ENCODE measurements at regions of chr10 and their contacts with region 1.

Region 1: DNA sequence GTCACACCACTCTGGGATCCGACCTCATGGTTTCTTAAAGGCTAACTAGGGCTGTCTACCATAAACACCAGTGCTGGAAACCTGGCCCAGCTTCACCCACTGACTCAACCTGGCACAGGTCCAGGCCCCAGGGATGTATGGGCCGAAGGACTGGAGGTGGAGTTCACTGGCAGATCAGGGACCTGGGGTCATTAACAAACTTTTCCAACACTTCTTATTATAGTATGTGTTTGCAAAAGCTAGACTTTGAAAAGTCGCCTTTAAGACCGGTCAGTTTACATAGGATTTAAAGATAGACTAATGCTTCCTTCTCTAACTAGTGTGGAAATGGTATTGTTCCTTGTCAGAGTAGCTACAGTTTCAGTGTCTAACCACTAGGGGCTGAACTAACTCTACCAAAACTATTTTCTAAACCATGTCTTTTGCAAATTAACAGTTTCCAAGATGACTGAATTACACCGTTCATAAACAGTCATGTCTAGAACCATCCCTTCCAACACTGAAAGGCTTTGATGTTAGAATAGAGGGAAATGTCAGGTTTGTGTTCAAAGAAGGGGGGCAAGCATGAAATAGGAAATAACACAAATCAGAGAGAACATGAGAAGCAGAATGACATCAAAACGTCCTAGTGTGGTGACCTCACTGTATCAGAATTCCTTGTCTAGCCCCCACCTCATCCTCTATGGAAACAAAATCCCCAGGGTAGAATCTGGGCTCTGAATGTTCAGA is 29.7 kb downstream of the STN1 start:
- DNase-seq: peak; percentile 33
- ATAC-seq: peak; percentile 88
- H3K4me3 Mint-ChIP-seq: no peak overlapping the region
- H3K27ac Mint-ChIP-seq: peak overlapping the region; percentile 65
- H3K4me1 Mint-ChIP-seq: peaks cover 27% of the 10 kb centered on the region
- H3K27me3 Mint-ChIP-seq: no peaks in the 10 kb centered on the region
- CTCF ChIP-seq: peak; percentile 91

Region 2: DNA sequence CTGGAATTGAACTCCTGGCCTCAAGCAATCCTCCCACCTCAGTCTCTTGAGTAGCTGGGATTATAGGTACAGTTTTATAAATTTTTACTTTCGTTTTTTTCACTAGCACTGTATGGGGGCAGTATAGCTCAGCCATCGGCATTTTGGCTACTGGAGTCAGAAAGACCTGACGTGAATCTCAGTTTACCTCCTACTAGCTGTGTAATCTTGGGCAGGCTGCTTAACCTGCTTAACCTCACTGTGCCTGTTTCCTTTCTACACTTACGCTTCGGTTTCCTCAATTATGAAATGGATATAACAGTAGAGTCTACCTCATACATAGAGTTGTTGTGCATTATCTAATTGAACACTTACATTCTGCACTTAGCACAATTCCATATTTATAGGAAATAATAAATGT is 13.0 kb after region 1 on chr10:
- CTCF ChIA-PET with region 1: interaction called, 18 read pairs
- POLR2A ChIA-PET with region 1: interaction called, 4 read pairs
- intact Hi-C with region 1: no loop called
- DNase-seq: no peak
- ATAC-seq: peak; percentile 79
- H3K4me3 Mint-ChIP-seq: peak overlapping the region; percentile 59
- H3K27ac Mint-ChIP-seq: peak overlapping the region; percentile 81
- H3K4me1 Mint-ChIP-seq: peaks cover 50% of the 10 kb centered on the region
- H3K27me3 Mint-ChIP-seq: no peaks in the 10 kb centered on the region
- CTCF ChIP-seq: no peak

Region 3: GRCh38 chr10:103942866-103943265 is 54.6 kb after region 1 on chr10:
- CTCF ChIA-PET with region 1: interaction called, 10 read pairs
- POLR2A ChIA-PET with region 1: no interaction called
- intact Hi-C with region 1: no loop called
- DNase-seq: no peak
- ATAC-seq: no peak
- H3K4me3 Mint-ChIP-seq: no peak overlapping the region
- H3K27ac Mint-ChIP-seq: no peak overlapping the region
- H3K4me1 Mint-ChIP-seq: peaks cover 3% of the 10 kb centered on the region
- H3K27me3 Mint-ChIP-seq: no peaks in the 10 kb centered on the region
- CTCF ChIP-seq: no peak

Region 4: GRCh38 chr10:104018471-104018870 is 130.2 kb after region 1 on chr10:
- CTCF ChIA-PET with region 1: interaction called, 15 read pairs
- POLR2A ChIA-PET with region 1: no interaction called
- intact Hi-C with region 1: no loop called
- DNase-seq: no peak
- ATAC-seq: no peak
- H3K4me3 Mint-ChIP-seq: no peak overlapping the region
- H3K27ac Mint-ChIP-seq: no peak overlapping the region
- H3K4me1 Mint-ChIP-seq: peaks cover 11% of the 10 kb centered on the region
- H3K27me3 Mint-ChIP-seq: no peaks in the 10 kb centered on the region
- CTCF ChIP-seq: no peak

Region 5: DNA sequence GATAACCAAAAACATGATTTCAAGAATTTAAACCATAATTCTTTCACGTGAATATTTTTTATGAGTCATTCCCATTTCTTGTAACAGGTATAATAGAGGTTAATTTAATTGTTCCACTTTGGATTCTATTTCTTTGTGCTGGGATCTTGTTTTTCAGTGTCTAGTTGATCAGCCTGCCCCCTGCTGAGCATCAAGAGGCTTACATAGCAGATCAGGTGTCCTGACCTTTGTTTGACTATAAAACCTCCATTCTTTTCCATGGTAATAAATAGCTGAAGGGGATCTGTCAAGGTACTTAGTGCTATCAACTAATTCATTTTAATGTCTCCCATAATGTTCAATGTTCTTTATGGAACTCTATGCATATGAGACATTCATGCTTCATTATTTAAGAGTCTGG is 192.5 kb after region 1 on chr10:
- CTCF ChIA-PET with region 1: interaction called, 11 read pairs
- POLR2A ChIA-PET with region 1: no interaction called
- intact Hi-C with region 1: no loop called
- DNase-seq: peak; percentile 33
- ATAC-seq: peak; percentile 65
- H3K4me3 Mint-ChIP-seq: no peak overlapping the region
- H3K27ac Mint-ChIP-seq: no peak overlapping the region
- H3K4me1 Mint-ChIP-seq: no peaks in the 10 kb centered on the region
- H3K27me3 Mint-ChIP-seq: no peaks in the 10 kb centered on the region
- CTCF ChIP-seq: peak; percentile 53

Region 6: GRCh38 chr10:104209575-104210198 is 321.4 kb after region 1 on chr10:
- CTCF ChIA-PET with region 1: interaction called, 7 read pairs
- POLR2A ChIA-PET with region 1: no interaction called
- intact Hi-C with region 1: loop called (anchors 10 kb)
- DNase-seq: peak; percentile 63
- ATAC-seq: peak; percentile 65
- H3K4me3 Mint-ChIP-seq: no peak overlapping the region
- H3K27ac Mint-ChIP-seq: no peak overlapping the region
- H3K4me1 Mint-ChIP-seq: no peaks in the 10 kb centered on the region
- H3K27me3 Mint-ChIP-seq: peaks cover 6% of the 10 kb centered on the region
- CTCF ChIP-seq: peak; percentile 54

Measured in activated CD8-positive, alpha-beta T cell treated with anti-CD3 and anti-CD28 coated beads for 36 hours (primary cell).